Ovary (tissue), 10 donors: ENCODE measurements at regions of chr16 and their contacts with region 1.

Region 1: DNA sequence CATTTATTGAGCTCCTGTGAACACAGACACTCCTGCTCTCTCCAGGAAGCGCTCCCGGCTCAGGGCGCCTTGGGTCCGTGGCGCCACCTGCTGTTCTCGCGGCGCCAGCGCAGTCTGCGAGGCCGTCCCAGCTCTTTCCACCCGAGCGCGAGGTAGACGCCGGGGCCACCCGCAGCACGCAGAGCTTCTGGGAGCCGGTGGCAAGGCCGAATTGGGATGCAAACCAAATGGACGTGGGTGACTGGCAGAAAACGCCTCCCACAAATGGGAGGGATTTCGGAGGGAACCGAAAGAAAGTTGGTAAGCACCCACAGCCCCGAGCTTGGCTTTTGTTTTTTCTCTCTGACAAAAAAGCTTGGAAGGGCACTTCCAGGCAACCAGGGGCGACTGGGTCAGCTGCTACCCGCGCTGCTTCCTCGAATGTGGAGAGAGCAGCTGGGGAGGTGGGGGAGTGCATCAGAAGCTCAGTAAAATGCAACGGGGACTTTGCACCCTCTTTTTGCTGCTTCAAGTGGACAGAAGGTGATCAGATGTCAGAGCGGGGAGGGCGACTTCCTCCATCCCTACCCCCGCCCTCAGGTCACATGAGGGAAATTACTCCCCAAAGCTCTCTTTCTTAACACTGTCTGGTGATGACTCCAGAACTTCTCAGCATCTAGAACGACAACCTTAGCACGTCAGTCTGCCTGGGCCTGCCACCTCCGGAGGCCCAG is 13.5 kb upstream of the N4BP1 start:
- DNase-seq: peak; percentile 62 to 86 (median 75)
- H3K4me3 ChIP-seq: peak overlapping the region; percentile 41
- H3K27ac ChIP-seq: no peak overlapping the region
- H3K4me1 ChIP-seq: no peaks in the 10 kb centered on the region
- H3K27me3 ChIP-seq: no peaks in the 10 kb centered on the region
- CTCF ChIP-seq: peak; percentile 89 to 92 (median 90)
- EP300 ChIP-seq: no peak
- POLR2A ChIP-seq: no peak

Region 2: DNA sequence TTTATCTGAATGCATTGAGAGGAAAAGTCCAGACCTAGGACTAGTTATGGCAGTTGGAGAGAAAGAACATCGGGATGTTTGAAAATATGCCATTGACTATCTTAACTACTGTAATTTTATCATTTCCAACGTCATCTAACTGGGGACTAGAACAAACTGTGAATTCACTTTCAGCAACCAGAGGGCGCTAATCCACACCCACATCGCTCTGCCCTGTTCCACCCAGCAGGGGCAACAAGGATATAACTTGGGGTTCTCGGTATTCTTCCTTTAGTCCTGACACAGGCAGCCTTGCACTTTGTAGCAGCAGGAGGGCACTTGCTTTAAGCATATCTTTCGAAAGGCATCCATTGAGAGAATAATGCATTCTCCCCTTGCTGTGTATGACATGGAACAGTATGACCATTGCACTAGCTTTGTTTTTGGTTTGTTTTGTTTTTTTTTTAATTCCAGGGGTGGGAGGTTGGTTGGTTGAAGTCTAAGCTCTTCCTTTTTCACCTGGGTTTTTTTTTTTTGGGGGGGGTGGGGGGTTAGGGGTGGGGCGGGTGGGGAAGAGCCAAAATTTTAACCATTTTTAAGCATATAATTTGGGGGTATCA is 269.8 kb before region 1 on chr16:
- intact Hi-C with region 1: loop called in 3 of 4 experiments (anchors 5 to 10 kb)
- DNase-seq: peak; percentile 24 to 65 (median 48)
- H3K4me3 ChIP-seq: no peak overlapping the region
- H3K27ac ChIP-seq: no peak overlapping the region
- H3K4me1 ChIP-seq: no peaks in the 10 kb centered on the region
- H3K27me3 ChIP-seq: no peaks in the 10 kb centered on the region
- CTCF ChIP-seq: peak; percentile 61 to 79 (median 68)
- EP300 ChIP-seq: no peak
- POLR2A ChIP-seq: no peak